CD4-positive, alpha-beta memory T cell (primary cell): ENCODE measurements at regions of chr2 and their contacts with region 1.

Region 1: DNA sequence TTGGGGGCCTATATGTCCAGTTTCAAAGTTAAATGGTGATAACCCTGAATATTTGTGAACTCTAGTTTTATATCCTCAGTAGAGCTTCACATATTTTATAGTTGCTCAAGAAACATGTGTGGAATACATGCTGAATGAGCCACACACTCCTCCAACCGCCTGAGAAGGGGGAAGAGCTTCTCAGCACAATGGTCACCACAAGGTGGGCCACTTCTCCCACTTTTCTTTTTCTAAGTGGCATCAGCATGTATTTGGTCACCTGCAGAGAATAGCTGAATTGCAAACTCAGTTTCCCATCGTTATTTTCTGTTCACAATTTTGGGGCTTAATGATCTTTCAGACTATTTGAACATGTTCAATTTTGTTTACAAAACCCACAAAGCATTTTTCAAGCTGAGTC is 340.5 kb downstream of the PARD3B start:
- DNase-seq: no peak
- H3K4me3 ChIP-seq: no peak overlapping the region
- H3K4me3 Mint-ChIP-seq: no peak overlapping the region
- H3K27ac ChIP-seq: no peak overlapping the region
- H3K27ac Mint-ChIP-seq: peak overlapping the region in 1 of 7 donors; percentile 6
- H3K4me1 ChIP-seq: peaks cover 22% of the 10 kb centered on the region
- H3K4me1 Mint-ChIP-seq: peaks cover 17 to 43% (median 23%) of the 10 kb centered on the region in 4 donors
- H3K27me3 ChIP-seq: no peaks in the 10 kb centered on the region
- H3K27me3 Mint-ChIP-seq: no peaks in the 10 kb centered on the region

Region 2: DNA sequence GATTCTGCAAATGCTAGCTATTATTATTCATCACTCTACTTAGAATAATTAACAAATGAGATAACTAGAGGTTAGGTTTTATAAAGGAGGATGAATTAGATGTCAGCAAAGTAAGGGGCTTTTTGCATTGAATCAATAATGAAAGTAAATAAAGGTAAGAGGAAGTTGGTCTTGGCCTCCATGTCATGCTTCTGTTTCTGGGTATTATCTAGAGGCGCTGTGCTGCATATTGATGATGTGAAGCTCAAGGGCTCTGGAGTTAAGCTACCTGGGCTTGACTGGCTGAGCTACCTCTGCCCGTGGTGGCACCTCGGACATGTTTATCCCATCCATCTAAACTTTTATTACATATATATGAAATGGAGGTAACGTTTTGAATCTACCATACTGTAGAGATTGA is 10.4 kb after region 1 on chr2:
- CTCF ChIA-PET with region 1: interaction called, 3 read pairs
- POLR2A ChIA-PET with region 1: interaction called, 10 read pairs
- intact Hi-C with region 1: no loop called
- DNase-seq: no peak
- H3K4me3 ChIP-seq: no peak overlapping the region
- H3K4me3 Mint-ChIP-seq: no peak overlapping the region
- H3K27ac ChIP-seq: no peak overlapping the region
- H3K27ac Mint-ChIP-seq: no peak overlapping the region
- H3K4me1 ChIP-seq: peaks cover 34% of the 10 kb centered on the region
- H3K4me1 Mint-ChIP-seq: peaks cover 8 to 15% (median 13%) of the 10 kb centered on the region in 4 donors
- H3K27me3 ChIP-seq: no peaks in the 10 kb centered on the region
- H3K27me3 Mint-ChIP-seq: no peaks in the 10 kb centered on the region

Region 3: DNA sequence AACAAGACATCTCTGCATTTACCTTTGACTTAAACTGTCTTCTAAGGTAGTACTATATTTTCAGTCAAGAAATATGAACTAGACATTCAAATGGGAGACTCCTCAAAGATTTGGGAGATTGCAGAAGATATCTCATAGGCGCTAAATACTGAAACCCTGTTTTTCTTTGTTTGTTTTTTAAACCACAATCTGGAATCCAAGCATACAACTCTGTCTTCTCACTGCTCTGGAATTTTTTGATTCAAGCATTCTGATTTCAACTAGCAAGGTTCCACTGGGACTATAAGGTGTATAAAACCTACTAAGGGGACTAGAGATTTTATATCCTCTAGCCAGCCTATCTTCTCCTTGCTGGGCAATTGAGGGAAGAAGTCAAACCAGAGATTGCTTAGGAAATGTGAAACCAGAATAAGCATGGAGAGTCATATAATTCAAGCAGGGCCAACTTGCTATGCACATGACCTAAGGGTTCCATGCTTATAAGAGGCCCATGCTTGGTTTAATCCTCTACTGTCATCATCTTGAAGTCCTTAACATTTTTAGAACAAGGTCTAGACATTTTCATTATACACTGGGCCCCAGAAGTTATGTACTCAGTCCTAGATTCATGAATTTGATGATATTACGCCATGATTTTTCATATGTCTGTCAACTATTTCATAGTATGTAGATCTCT is 65.1 kb after region 1 on chr2:
- CTCF ChIA-PET with region 1: no interaction called
- POLR2A ChIA-PET with region 1: interaction called, 4 read pairs
- intact Hi-C with region 1: loop called (anchors 2 kb)
- DNase-seq: no peak
- H3K4me3 ChIP-seq: no peak overlapping the region
- H3K4me3 Mint-ChIP-seq: no peak overlapping the region
- H3K27ac ChIP-seq: no peak overlapping the region
- H3K27ac Mint-ChIP-seq: no peak overlapping the region
- H3K4me1 ChIP-seq: peaks cover 27% of the 10 kb centered on the region
- H3K4me1 Mint-ChIP-seq: peaks cover 25 to 42% (median 38%) of the 10 kb centered on the region in 4 donors
- H3K27me3 ChIP-seq: no peaks in the 10 kb centered on the region
- H3K27me3 Mint-ChIP-seq: no peaks in the 10 kb centered on the region